CD8-positive, alpha-beta T cell (primary cell): ENCODE measurements at regions of chr19 and their contacts with region 1.

Region 1: DNA sequence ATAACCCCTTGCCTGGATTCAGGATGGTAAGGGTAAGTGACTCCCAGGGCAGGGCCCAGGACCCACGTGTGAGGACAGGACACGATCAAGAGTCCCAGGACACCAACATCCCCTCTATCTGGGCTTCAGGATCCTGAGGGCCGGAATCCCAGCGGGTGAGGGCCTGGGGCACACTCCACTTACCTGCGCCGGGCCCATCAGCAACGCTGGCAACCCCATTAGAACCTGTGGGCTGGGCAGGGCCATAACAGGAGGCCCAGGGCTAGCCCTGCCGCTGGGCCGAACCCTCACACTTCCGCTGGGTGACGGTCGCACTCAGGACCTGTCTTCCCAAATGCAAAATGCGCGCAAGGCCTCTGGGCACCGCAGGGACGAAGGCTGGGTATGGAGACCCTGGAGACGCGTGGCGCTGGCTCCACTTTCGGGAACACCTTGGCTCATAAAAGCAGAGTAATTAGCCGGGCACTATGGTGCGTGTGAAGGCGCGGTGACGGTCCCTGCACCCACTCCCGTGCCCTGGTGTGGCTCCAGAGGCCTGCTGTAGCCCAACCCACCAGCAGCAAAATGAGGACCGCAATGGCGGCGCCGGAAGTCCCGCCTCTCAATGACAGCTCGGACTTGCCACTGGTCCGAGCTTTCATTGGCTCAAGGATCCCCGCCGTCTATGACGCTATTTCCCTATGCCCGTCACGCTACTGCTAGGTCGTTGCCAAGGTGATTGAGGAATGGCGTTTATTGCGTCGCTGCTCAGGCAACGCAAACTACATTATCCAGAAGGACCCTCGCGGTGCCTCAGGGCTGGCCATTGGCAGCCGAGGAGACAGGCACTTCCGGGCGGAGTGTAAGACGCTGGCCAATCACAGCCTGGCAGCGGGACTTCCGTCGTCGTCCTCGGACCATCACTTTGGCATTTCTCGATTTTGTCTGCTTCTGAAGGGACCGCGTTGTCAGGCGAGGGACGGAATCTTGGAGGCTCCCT is at the start of gene ZNF132:
- DNase-seq: peak; percentile 85 to 100 (median 92)
- ATAC-seq: peak; percentile 97
- H3K4me3 ChIP-seq: peak within 1 kb of the TSS; percentile 76 to 81
- H3K4me3 Mint-ChIP-seq: peak within 1 kb of the TSS; percentile 91
- H3K27ac ChIP-seq: peak within 1 kb of the TSS; percentile 70 to 91
- H3K27ac Mint-ChIP-seq: peak within 1 kb of the TSS; percentile 96
- H3K4me1 ChIP-seq: peaks cover 16% of the 10 kb centered on the region
- H3K4me1 Mint-ChIP-seq: peaks cover 29% of the 10 kb centered on the region
- H3K27me3 ChIP-seq: no peaks in the 10 kb centered on the region
- H3K27me3 Mint-ChIP-seq: no peaks in the 10 kb centered on the region
- CTCF ChIP-seq: no peak
- total RNA-seq, gene ZNF132: 0.75 to 1.3 TPM

Region 2: GRCh38 chr19:58182989-58183816 is 256.7 kb before region 1 on chr19 and contains the start of gene ZNF274:
- CTCF ChIA-PET with region 1: no interaction called
- POLR2A ChIA-PET with region 1: no interaction called
- intact Hi-C with region 1: loop called in 1 of 2 experiments (anchors 1 kb)
- DNase-seq: peak; percentile 88 to 96 (median 94)
- ATAC-seq: peak; percentile 86
- H3K4me3 ChIP-seq: peak within 1 kb of the TSS; percentile 90 to 94
- H3K4me3 Mint-ChIP-seq: peak within 1 kb of the TSS; percentile 91
- H3K27ac ChIP-seq: peak within 1 kb of the TSS; percentile 99 to 100
- H3K27ac Mint-ChIP-seq: peak within 1 kb of the TSS; percentile 100
- H3K4me1 ChIP-seq: peaks cover 9% of the 10 kb centered on the region
- H3K4me1 Mint-ChIP-seq: peaks cover 22% of the 10 kb centered on the region
- H3K27me3 ChIP-seq: no peaks in the 10 kb centered on the region
- H3K27me3 Mint-ChIP-seq: no peaks in the 10 kb centered on the region
- CTCF ChIP-seq: no peak
- total RNA-seq, gene ZNF274: 52.7 to 58.9 TPM

Region 3: GRCh38 chr19:58311345-58311865 is 128.5 kb before region 1 on chr19:
- CTCF ChIA-PET with region 1: no interaction called
- POLR2A ChIA-PET with region 1: no interaction called
- intact Hi-C with region 1: no loop called
- DNase-seq: no peak
- ATAC-seq: no peak
- H3K4me3 ChIP-seq: no peak overlapping the region
- H3K4me3 Mint-ChIP-seq: no peak overlapping the region
- H3K27ac ChIP-seq: no peak overlapping the region
- H3K27ac Mint-ChIP-seq: no peak overlapping the region
- H3K4me1 ChIP-seq: peaks cover 10% of the 10 kb centered on the region
- H3K4me1 Mint-ChIP-seq: peaks cover 31% of the 10 kb centered on the region
- H3K27me3 ChIP-seq: no peaks in the 10 kb centered on the region
- H3K27me3 Mint-ChIP-seq: no peaks in the 10 kb centered on the region
- CTCF ChIP-seq: no peak

Region 4: DNA sequence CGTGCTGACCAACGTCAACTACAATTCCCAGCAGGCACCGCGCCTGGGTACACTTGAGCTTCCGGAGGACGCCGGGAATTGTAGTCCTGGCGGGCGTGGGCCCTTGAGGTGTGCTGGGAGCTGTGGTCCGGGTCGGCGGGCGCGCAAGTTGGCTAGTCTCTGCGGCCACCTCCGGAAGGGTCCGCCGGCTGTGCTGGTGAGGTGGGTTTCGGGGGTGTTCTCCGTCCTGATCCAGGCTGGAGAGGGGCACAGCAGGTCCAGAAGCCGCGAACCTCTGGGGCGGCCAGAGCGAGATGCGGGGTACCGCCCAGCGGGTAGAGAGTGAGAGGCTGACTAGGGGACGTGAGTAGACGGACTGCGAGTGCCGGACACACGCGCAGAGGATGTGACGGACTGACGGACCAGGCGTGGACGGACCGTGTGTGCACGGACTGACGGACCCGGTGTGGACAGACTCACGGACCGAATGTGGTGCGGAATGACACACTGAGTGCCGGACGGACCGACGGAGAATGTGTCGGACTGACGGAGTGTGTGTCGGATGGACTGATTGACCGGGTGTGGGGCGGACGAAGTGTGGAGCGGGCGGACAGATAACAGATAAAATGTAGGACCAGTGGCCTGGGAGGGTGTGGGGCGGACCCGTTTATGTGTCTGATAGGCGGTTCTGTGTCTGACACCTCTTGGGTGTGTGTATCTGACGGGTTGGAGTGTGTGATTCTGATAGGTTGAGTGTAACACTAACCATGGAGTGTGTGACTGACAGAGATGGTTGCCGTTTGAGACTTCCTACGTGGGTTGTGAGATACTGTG is 112.7 kb before region 1 on chr19 and contains the start of gene ZSCAN22:
- CTCF ChIA-PET with region 1: no interaction called
- POLR2A ChIA-PET with region 1: no interaction called
- intact Hi-C with region 1: loop called (anchors 1 kb)
- DNase-seq: peak; percentile 76 to 94 (median 89)
- ATAC-seq: peak; percentile 78
- H3K4me3 ChIP-seq: peak within 1 kb of the TSS; percentile 84 to 96
- H3K4me3 Mint-ChIP-seq: no peak within 1 kb of the TSS
- H3K27ac ChIP-seq: peak within 1 kb of the TSS; percentile 77 to 96
- H3K27ac Mint-ChIP-seq: no peak within 1 kb of the TSS
- H3K4me1 ChIP-seq: peaks cover 19% of the 10 kb centered on the region
- H3K4me1 Mint-ChIP-seq: peaks cover 3% of the 10 kb centered on the region
- H3K27me3 ChIP-seq: no peaks in the 10 kb centered on the region
- H3K27me3 Mint-ChIP-seq: no peaks in the 10 kb centered on the region
- CTCF ChIP-seq: no peak
- total RNA-seq, gene ZSCAN22: 1.7 to 2.2 TPM

Region 5: GRCh38 chr19:58386576-58387337 is 53.1 kb before region 1 on chr19 and contains the start of gene RPS5:
- CTCF ChIA-PET with region 1: no interaction called
- POLR2A ChIA-PET with region 1: no interaction called
- intact Hi-C with region 1: loop called (anchors 1 kb)
- DNase-seq: peak; percentile 92 to 100 (median 95)
- ATAC-seq: peak; percentile 88
- H3K4me3 ChIP-seq: peak within 1 kb of the TSS; percentile 88 to 90
- H3K4me3 Mint-ChIP-seq: peak within 1 kb of the TSS; percentile 93
- H3K27ac ChIP-seq: peak within 1 kb of the TSS; percentile 94 to 98
- H3K27ac Mint-ChIP-seq: peak within 1 kb of the TSS; percentile 99
- H3K4me1 ChIP-seq: peaks cover 41% of the 10 kb centered on the region
- H3K4me1 Mint-ChIP-seq: peaks cover 52% of the 10 kb centered on the region
- H3K27me3 ChIP-seq: no peaks in the 10 kb centered on the region
- H3K27me3 Mint-ChIP-seq: no peaks in the 10 kb centered on the region
- CTCF ChIP-seq: no peak
- total RNA-seq, gene RPS5: 1,884 to 1,887 TPM

Region 6: GRCh38 chr19:58451358-58452101 is 11.7 kb after region 1 on chr19 and contains the start of gene ZNF324B:
- CTCF ChIA-PET with region 1: no interaction called
- POLR2A ChIA-PET with region 1: interaction called, 4 read pairs
- intact Hi-C with region 1: loop called (anchors 1 kb)
- DNase-seq: peak; percentile 92 to 98 (median 96)
- ATAC-seq: peak; percentile 96
- H3K4me3 ChIP-seq: peak within 1 kb of the TSS; percentile 55 to 83
- H3K4me3 Mint-ChIP-seq: peak within 1 kb of the TSS; percentile 82
- H3K27ac ChIP-seq: peak within 1 kb of the TSS; percentile 44 to 70
- H3K27ac Mint-ChIP-seq: peak within 1 kb of the TSS; percentile 27
- H3K4me1 ChIP-seq: peaks cover 10% of the 10 kb centered on the region
- H3K4me1 Mint-ChIP-seq: peaks cover 16% of the 10 kb centered on the region
- H3K27me3 ChIP-seq: peaks cover 0 to 9% of the 10 kb centered on the region in 2 experiments
- H3K27me3 Mint-ChIP-seq: peaks cover 9% of the 10 kb centered on the region
- CTCF ChIP-seq: no peak
- total RNA-seq, gene ZNF324B: 6.2 to 6.5 TPM

Region 7: DNA sequence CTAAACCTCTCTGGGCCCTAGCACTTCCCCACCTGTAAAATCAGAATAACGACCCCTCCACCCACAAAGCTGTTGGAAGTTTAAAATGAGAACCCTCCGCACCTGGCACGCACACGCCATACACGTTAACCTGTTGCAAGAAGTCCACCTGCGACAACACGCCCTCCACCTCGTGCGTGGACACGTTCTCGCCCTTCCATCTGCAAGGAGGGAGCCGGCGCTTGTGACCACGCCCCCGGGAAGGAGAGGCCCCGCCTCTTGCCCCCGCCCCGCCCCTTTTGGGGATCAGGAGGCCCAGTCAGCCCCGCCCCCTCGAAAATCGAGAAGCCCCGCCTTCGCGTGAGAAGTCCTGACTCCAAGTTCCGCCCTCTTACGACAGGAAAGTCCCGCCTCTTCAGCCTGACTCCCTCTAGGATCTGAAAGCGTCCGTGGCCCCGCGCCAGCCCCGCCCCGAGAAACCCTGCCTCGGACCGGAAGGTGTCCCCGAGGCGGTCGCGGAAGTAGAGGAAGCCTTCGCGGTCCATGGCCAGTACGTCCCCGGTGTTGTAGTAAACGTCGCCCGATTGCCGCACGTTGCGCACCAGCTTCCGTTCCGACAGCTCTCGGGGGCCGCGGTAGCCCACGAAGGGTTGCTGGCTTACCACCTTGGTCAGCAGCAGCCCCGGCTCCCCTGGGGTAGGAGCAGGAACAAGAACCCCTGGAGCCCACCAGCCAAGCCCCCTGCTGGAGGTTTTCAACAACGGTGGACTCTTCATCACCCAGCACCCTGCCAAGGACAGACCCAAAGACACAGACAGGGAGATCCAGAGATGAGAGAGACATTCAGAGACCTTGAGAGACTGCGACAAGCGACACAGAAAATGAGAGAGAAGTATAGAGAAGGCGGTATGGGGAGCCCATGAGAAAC is 59.4 kb after region 1 on chr19:
- CTCF ChIA-PET with region 1: no interaction called
- POLR2A ChIA-PET with region 1: no interaction called
- intact Hi-C with region 1: loop called (anchors 1 to 2 kb)
- DNase-seq: peak; percentile 83 to 97 (median 95)
- ATAC-seq: peak; percentile 86
- H3K4me3 ChIP-seq: peak overlapping the region; percentile 64
- H3K4me3 Mint-ChIP-seq: peak overlapping the region; percentile 92
- H3K27ac ChIP-seq: peak overlapping the region; percentile 22 to 88
- H3K27ac Mint-ChIP-seq: peak overlapping the region; percentile 96
- H3K4me1 ChIP-seq: peaks cover 17% of the 10 kb centered on the region
- H3K4me1 Mint-ChIP-seq: peaks cover 25% of the 10 kb centered on the region
- H3K27me3 ChIP-seq: no peaks in the 10 kb centered on the region
- H3K27me3 Mint-ChIP-seq: no peaks in the 10 kb centered on the region
- CTCF ChIP-seq: no peak

Region 8: GRCh38 chr19:58572818-58573657 is 133.2 kb after region 1 on chr19 and contains the start of gene MZF1:
- CTCF ChIA-PET with region 1: no interaction called
- POLR2A ChIA-PET with region 1: no interaction called
- intact Hi-C with region 1: loop called (anchors 1 kb)
- DNase-seq: peak; percentile 99 to 100 (median 99)
- ATAC-seq: peak; percentile 70
- H3K4me3 ChIP-seq: peak within 1 kb of the TSS; percentile 83 to 84
- H3K4me3 Mint-ChIP-seq: peak within 1 kb of the TSS; percentile 98
- H3K27ac ChIP-seq: peak within 1 kb of the TSS; percentile 98 to 100
- H3K27ac Mint-ChIP-seq: peak within 1 kb of the TSS; percentile 99
- H3K4me1 ChIP-seq: peaks cover 22% of the 10 kb centered on the region
- H3K4me1 Mint-ChIP-seq: peaks cover 30% of the 10 kb centered on the region
- H3K27me3 ChIP-seq: no peaks in the 10 kb centered on the region
- H3K27me3 Mint-ChIP-seq: no peaks in the 10 kb centered on the region
- CTCF ChIP-seq: no peak
- total RNA-seq, gene MZF1: 14.1 to 15.0 TPM